Stomach (tissue), 19 donors: ENCODE measurements at regions of chr17 and their contacts with region 1.

Region 1: DNA sequence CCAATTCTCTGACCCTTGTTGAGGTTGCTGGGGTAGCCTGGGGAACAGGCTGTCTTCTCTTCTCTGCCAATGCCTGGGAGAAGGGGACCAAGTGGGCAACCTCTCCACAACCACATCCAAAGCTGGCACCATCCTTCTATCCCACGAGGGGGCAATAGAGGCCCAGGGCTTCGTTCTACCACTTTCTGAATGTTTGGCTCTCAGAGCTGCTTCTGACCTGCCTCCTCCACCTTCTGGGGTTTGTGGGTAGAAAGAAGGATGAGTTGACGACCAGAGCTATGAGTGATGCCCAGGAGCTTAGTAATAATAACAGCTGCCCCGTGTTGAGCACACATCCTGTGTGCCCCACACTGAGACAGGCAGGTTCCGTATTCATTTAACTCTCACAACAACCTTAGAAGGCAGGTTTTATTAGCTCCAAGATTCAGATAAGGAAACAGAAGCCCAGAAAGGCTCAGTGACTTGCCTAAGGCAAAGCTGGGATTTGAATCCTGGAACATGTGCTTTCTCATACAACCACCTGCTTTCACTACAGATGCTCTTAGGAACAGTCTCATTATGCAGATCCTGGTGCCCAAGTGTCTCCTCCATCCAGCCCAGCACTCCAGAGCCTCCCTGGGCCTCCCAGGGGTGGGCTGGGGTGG is 11.1 kb downstream of the TSPOAP1 start:
- DNase-seq: peak; percentile 63 to 76
- H3K4me3 ChIP-seq: no peak overlapping the region
- H3K27ac ChIP-seq: peak overlapping the region in 1 of 5 donors; percentile 32
- H3K4me1 ChIP-seq: peaks cover 0 to 8% (median 0%) of the 10 kb centered on the region in 4 donors
- H3K27me3 ChIP-seq: no peaks in the 10 kb centered on the region
- CTCF ChIP-seq: peak in 5 of 7 experiments; percentile 44 to 75 (median 64)
- EP300 ChIP-seq: no peak
- POLR2A ChIP-seq: no peak

Region 2: DNA sequence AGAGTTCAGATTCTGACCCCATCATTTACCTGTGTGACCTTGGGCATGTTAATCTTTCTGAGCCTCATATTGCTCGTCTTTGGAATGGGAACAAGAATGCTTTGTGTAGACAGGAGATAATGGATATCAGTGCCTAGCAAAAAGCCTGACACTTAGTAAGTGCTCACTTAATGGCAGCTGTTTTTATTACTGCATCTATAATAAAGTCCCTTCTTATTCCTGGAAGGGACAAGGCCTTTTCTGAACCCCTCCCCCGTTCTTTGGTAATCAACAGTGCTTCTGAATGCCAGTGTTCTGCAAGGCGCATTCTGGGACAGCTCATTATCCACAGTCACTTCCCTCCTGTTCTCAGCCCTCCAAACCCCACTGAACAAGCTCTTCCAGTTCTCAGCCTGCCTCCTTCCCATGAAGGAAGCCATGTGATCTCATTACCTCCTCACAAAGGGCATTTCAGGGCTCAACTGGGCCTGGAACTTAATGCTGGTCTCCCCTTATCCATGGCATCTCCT is 59.6 kb after region 1 on chr17:
- intact Hi-C with region 1: no loop called
- DNase-seq: peak; percentile 63 to 92
- H3K4me3 ChIP-seq: no peak overlapping the region
- H3K27ac ChIP-seq: peak overlapping the region in 2 of 5 donors; percentile 13 to 47
- H3K4me1 ChIP-seq: peaks cover 22 to 49% (median 26%) of the 10 kb centered on the region in 4 donors
- H3K27me3 ChIP-seq: no peaks in the 10 kb centered on the region
- CTCF ChIP-seq: no peak
- EP300 ChIP-seq: no peak
- POLR2A ChIP-seq: no peak

Region 3: GRCh38 chr17:58447039-58447975 is 129.8 kb after region 1 on chr17:
- intact Hi-C with region 1: loop called (anchors 10 kb)
- DNase-seq: peak; percentile 80 to 88
- H3K4me3 ChIP-seq: no peak overlapping the region
- H3K27ac ChIP-seq: no peak overlapping the region
- H3K4me1 ChIP-seq: no peaks in the 10 kb centered on the region
- H3K27me3 ChIP-seq: no peaks in the 10 kb centered on the region
- CTCF ChIP-seq: peak in 5 of 7 experiments; percentile 43 to 72 (median 64)
- EP300 ChIP-seq: no peak
- POLR2A ChIP-seq: no peak

Region 4: GRCh38 chr17:58777396-58777795 is 459.9 kb after region 1 on chr17:
- intact Hi-C with region 1: no loop called
- DNase-seq: no peak
- H3K4me3 ChIP-seq: no peak overlapping the region
- H3K27ac ChIP-seq: no peak overlapping the region
- H3K4me1 ChIP-seq: no peaks in the 10 kb centered on the region
- H3K27me3 ChIP-seq: no peaks in the 10 kb centered on the region
- CTCF ChIP-seq: no peak
- EP300 ChIP-seq: no peak
- POLR2A ChIP-seq: no peak